Right ventricle myocardium inferior (tissue), 1 donor: ENCODE measurements at regions of chrX and their contacts with region 1.

Region 1: DNA sequence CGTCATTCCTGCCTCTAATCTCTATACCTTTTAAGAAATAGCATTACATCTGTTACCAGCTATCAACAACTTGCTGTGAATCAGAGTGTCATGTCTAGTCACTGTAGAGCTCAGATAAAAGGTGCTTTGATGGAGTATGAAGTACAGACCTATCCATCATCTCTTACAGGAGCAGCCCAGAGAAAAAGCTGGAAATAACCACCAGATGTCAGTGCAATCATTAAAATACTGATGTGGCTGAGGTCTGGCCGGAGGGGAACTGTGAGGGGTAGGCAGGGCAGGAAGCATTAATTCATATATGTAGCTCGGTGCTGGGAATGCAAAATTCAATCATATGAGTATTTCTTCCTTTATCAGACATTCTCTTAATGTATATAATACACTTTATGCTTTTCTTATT is 100.6 kb downstream of the AKAP4 start:
- DNase-seq: no peak
- ATAC-seq: no peak

Region 2: GRCh38 chrX:50067435-50068284 is 32.5 kb before region 1 on chrX:
- intact Hi-C with region 1: no loop called
- DNase-seq: no peak
- ATAC-seq: no peak

Region 3: DNA sequence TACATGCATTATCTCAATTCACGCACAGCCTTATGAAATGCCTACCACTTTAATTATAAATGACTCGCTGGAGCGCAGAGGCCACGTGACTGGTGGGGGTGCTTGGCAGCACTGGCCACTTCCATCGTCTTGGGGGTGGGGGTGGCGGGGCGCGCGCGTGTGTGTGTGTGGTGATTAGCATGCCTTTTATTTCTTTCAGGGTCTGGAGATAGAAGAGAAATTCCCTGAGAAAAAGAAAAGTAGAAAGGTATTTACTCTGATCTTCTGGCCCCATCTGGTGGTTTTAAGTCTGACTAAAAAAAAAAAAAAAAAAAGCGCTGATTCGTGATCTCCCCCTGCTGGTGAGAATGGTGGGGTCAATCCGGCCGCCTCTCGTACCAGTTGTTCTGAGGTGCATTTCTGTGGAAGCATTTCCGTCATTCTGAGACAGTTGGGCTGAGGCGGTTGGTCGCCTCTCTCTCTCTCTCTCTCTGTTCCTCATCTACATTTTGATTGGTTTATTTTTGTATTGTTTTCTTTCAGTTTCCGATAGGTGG is 104.2 kb after region 1 on chrX and contains the start of gene CCNB3:
- intact Hi-C with region 1: loop called (anchors 5 kb)
- DNase-seq: peak; percentile 82
- ATAC-seq: peak; percentile 86
- total RNA-seq, gene CCNB3: 0.41 TPM

Region 4: GRCh38 chrX:50579955-50580354 is 479.8 kb after region 1 on chrX:
- intact Hi-C with region 1: loop called (anchors 10 kb)
- DNase-seq: no peak
- ATAC-seq: no peak